ENCODE measurements at regions of chr3 and their contacts with region 1.

Region 1: DNA sequence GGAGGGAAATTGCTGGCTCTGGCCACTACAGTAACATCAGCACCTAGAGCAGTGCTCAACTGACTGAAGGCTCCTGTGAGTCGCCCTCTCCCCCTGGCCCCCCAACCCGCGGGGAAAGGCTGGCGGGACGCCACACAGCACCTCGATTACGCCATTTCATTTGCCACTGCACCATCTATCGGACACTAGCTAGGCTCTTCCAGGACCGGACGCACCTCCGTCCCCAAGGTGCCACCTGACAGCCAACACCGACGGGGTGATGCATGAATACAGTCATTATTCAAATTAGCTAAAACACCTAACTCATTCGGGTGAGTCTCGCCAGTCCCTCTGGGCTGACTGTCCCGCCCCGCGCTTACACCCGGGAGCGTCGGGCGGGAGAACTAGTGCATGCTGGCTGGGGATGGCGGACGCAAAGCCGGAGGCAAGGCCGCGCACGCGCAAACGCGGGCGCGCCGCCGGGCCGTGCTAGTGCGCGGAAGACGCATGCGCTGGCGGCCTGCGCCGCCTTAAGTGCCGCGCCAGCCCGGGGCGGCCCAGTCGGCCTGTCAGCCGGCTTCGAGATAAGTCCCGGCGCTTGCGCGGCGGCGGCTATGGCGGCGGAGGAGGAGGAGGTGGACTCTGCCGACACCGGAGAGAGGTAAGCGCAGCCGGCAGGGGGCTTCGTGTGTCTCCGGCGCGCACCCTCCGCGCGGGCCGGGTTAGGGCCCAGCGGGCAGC is at the start of gene ABHD5:
- DNase-seq: peak; percentile 91
- H3K4me3 ChIP-seq: peak within 1 kb of the TSS; percentile 45 to 88 (median 71)
- H3K27ac ChIP-seq: peak within 1 kb of the TSS; percentile 94 to 96 (median 94)
- H3K4me1 ChIP-seq: peaks cover 15 to 18% of the 10 kb centered on the region in 2 donors
- H3K27me3 ChIP-seq: no peaks in the 10 kb centered on the region
- CTCF ChIP-seq: peak in 3 of 6 experiments; percentile 3 to 16 (median 6)
- POLR2A ChIP-seq: peak; percentile 86 to 98
- total RNA-seq, gene ABHD5: 33.1 to 45.4 (median 36.6) TPM

Region 2: GRCh38 chr3:43621656-43622432 is 68.7 kb before region 1 on chr3 and contains the start of gene ANO10:
- intact Hi-C with region 1: loop called (anchors 10 kb)
- DNase-seq: peak; percentile 99
- H3K4me3 ChIP-seq: peak within 1 kb of the TSS; percentile 79 to 99 (median 85)
- H3K27ac ChIP-seq: peak within 1 kb of the TSS; percentile 64 to 87 (median 68)
- H3K4me1 ChIP-seq: peaks cover 4 to 11% of the 10 kb centered on the region in 2 donors
- H3K27me3 ChIP-seq: no peaks in the 10 kb centered on the region
- CTCF ChIP-seq: no peak
- POLR2A ChIP-seq: peak in 1 of 2 donors; percentile 80
- total RNA-seq, gene ANO10: 26.7 to 33.9 (median 28.7) TPM

Region 3: DNA sequence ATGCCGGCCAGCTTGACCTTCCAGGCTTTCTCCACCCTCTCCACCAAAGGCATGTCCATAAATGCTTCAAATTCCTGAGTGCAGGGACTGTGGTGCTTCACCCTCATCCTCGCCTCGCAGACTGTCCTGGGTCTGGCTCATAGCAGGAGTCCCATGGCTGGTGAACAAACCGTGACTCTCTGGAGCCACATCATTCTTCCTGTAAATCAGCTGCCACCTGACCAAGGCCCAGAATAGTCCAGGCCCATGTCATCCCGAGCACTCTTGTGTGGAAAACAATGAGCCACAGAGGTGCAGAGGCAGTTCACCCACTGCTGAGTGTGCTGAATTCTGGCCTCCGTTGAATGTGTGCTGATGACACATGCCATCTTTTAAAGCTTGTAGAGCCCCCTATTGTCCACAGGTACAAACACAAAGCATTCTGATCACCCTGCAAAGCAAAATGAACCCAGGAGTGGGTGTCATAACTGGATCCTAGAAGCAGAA is 68.8 kb after region 1 on chr3:
- intact Hi-C with region 1: loop called (anchors 5 kb)
- DNase-seq: peak; percentile 47 to 72
- H3K4me3 ChIP-seq: no peak overlapping the region
- H3K27ac ChIP-seq: peak overlapping the region; percentile 60 to 83 (median 75)
- H3K4me1 ChIP-seq: peaks cover 9 to 29% of the 10 kb centered on the region in 2 donors
- H3K27me3 ChIP-seq: no peaks in the 10 kb centered on the region
- CTCF ChIP-seq: peak in 1 of 6 experiments; percentile 32
- POLR2A ChIP-seq: peak in 1 of 2 donors; percentile 6

Region 4: GRCh38 chr3:44104668-44105321 is 414.2 kb after region 1 on chr3:
- intact Hi-C with region 1: no loop called
- DNase-seq: peak; percentile 67 to 72
- H3K4me3 ChIP-seq: no peak overlapping the region
- H3K27ac ChIP-seq: peak overlapping the region; percentile 11 to 98 (median 61)
- H3K4me1 ChIP-seq: peaks cover 53 to 68% of the 10 kb centered on the region in 2 donors
- H3K27me3 ChIP-seq: no peaks in the 10 kb centered on the region
- CTCF ChIP-seq: no peak
- POLR2A ChIP-seq: no peak